ENCODE measurements at regions of chr22 and their contacts with region 1.

Region 1: DNA sequence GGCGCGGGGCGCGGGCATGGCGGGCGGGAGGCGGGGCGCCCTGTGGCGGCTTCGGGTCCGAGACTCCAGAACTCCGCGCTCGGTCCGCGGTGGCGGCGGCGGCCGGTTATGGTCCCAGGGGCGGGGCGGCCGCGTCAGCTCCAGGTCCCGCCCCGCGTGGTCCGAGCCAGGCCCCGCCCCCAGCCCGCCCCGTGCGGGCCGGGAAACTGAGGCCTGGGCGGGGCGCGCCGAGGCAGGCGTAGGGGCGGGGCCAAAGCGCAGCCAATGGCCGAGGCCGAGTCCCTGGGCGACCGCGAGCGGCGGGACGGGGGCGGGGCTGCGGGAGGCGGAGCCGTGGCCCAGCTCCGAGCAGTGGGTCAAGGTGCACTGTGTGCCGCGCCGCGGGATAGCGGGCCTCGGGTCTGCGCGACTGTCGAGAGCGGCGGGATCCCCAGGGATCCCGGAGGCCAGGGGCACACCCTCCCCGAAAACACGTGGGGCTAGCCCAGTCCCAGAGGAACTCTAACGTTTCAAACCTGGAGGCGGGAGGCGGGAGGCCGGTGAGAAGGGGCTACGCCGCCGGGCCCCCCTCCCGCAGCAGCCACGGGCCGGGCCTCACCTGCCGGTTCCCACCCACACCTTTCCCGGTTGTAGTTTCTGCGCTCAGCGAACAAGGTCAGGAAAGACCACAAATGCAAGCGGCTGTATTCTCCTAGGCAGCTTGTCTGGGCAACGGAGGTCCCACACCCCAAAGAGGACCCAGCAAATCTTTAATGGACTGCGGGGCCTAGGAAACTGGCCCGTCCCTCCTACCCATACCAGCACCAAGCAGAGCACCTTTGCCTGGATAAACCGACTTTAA is at the start of gene SLC25A1:
- DNase-seq: peak; percentile 93
- ATAC-seq: peak; percentile 82
- H3K4me3 Mint-ChIP-seq: peak within 1 kb of the TSS; percentile 75
- H3K27ac Mint-ChIP-seq: peak within 1 kb of the TSS; percentile 19
- H3K4me1 Mint-ChIP-seq: peaks cover 27% of the 10 kb centered on the region
- H3K27me3 Mint-ChIP-seq: no peaks in the 10 kb centered on the region
- total RNA-seq, gene SLC25A1: 48.5 to 52.8 TPM

Region 2: GRCh38 chr22:19122143-19122751 is 56.6 kb before region 1 on chr22 and contains the start of gene DGCR2:
- CTCF ChIA-PET with region 1: interaction called, 5 read pairs
- POLR2A ChIA-PET with region 1: no interaction called
- intact Hi-C with region 1: loop called (anchors 1 kb)
- DNase-seq: peak; percentile 99
- ATAC-seq: peak; percentile 97
- H3K4me3 Mint-ChIP-seq: peak within 1 kb of the TSS; percentile 80
- H3K27ac Mint-ChIP-seq: peak within 1 kb of the TSS; percentile 58
- H3K4me1 Mint-ChIP-seq: peaks cover 42% of the 10 kb centered on the region
- H3K27me3 Mint-ChIP-seq: no peaks in the 10 kb centered on the region
- total RNA-seq, gene DGCR2: 23.7 to 27.5 TPM

Region 3: DNA sequence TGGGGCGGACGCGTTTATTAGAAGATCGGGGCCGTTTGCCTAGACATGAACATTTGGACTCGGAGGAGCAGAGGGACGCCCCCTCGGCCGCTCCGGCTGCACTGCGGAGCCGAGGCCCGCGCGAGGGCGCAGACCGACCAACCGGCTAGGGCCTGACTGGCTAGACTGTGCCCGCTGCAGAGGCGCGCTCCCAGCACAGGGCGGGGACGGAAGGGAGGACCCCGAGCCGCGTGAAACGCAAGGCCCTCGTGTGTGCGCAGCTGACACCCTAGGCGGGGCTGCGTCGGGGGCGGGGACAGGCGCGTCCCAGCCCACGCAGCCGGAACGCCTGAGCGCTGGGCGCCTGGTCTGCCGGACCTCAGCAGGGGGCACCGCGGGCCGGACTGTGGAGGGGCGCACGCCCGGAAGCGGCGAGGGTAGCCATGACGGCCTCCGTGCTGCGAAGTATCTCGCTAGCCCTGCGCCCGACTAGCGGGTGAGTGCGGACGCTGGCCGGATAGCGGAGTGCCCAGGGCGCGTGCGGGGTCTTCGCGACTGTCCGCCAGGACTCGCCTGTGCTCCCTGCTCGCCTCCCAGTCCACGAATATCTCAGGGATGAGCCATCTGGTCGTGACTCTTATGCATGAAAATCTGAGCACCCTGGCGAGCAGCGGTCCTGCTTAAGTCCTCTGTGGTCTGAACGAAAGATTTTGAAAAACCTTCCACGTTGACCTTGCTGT is 253.4 kb after region 1 on chr22 and contains the start of gene MRPL40:
- CTCF ChIA-PET with region 1: no interaction called
- POLR2A ChIA-PET with region 1: no interaction called
- intact Hi-C with region 1: loop called (anchors 1 to 5 kb)
- DNase-seq: peak; percentile 94
- ATAC-seq: peak; percentile 86
- H3K4me3 Mint-ChIP-seq: peak within 1 kb of the TSS; percentile 75
- H3K27ac Mint-ChIP-seq: peak within 1 kb of the TSS; percentile 96
- H3K4me1 Mint-ChIP-seq: peaks cover 43% of the 10 kb centered on the region
- H3K27me3 Mint-ChIP-seq: no peaks in the 10 kb centered on the region
- total RNA-seq, gene MRPL40: 34.1 to 34.4 TPM

Region 4: GRCh38 chr22:19479357-19480172 is 300.7 kb after region 1 on chr22 and contains the start of gene CDC45:
- CTCF ChIA-PET with region 1: interaction called, 3 read pairs
- POLR2A ChIA-PET with region 1: interaction called, 6 read pairs
- intact Hi-C with region 1: loop called (anchors 1 to 2 kb)
- DNase-seq: peak; percentile 97
- ATAC-seq: peak; percentile 91
- H3K4me3 Mint-ChIP-seq: peak within 1 kb of the TSS; percentile 99
- H3K27ac Mint-ChIP-seq: peak within 1 kb of the TSS; percentile 99
- H3K4me1 Mint-ChIP-seq: peaks cover 45% of the 10 kb centered on the region
- H3K27me3 Mint-ChIP-seq: no peaks in the 10 kb centered on the region
- total RNA-seq, gene CDC45: 103 to 111 TPM

Region 5: GRCh38 chr22:19629720-19630419 is 451.0 kb after region 1 on chr22:
- CTCF ChIA-PET with region 1: interaction called, 4 read pairs
- POLR2A ChIA-PET with region 1: interaction called, 3 read pairs
- intact Hi-C with region 1: loop called (anchors 1 kb)
- DNase-seq: peak; percentile 93
- ATAC-seq: peak; percentile 96
- H3K4me3 Mint-ChIP-seq: no peak overlapping the region
- H3K27ac Mint-ChIP-seq: no peak overlapping the region
- H3K4me1 Mint-ChIP-seq: peaks cover 5% of the 10 kb centered on the region
- H3K27me3 Mint-ChIP-seq: no peaks in the 10 kb centered on the region